ENCODE measurements at regions of chr1 and their contacts with region 1.

Region 1: DNA sequence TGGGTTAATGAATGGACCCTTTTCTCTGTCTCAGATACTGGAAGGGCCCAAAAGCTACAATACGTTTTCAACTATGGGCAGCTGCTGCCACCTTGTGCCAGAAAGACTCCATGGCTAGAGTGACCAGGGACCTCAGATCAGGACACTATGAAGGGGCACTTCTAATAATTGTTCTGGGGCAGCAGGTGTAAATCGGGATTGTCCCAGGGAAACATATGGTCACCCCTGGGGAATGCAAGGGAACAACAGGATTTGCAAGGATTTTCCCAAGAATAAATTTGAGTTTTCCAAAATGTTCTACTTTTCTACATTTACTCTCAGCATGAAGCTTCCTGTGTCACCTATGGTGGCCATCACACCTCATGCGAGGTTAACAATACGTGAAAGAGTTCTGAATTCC is 12.0 kb upstream of the FCAMR start:
- DNase-seq: peak in 4 of 6 donors; percentile 37 to 64 (median 43)
- ATAC-seq: peak; percentile 75 to 97 (median 92)
- H3K4me3 ChIP-seq: no peak overlapping the region
- H3K27ac ChIP-seq: no peak overlapping the region
- H3K4me1 ChIP-seq: no peaks in the 10 kb centered on the region
- H3K27me3 ChIP-seq: no peaks in the 10 kb centered on the region
- CTCF ChIP-seq: peak in 3 of 4 donors; percentile 44 to 61 (median 51)

Region 2: GRCh38 chr1:206734499-206735142 is 247.6 kb before region 1 on chr1:
- intact Hi-C with region 1: loop called in 2 of 3 experiments (anchors 10 kb)
- DNase-seq: peak in 4 of 6 donors; percentile 48 to 84 (median 58)
- ATAC-seq: peak in 3 of 4 donors; percentile 67 to 71 (median 71)
- H3K4me3 ChIP-seq: no peak overlapping the region
- H3K27ac ChIP-seq: no peak overlapping the region
- H3K4me1 ChIP-seq: peaks cover 0 to 8% (median 0%) of the 10 kb centered on the region in 3 donors
- H3K27me3 ChIP-seq: no peaks in the 10 kb centered on the region
- CTCF ChIP-seq: peak; percentile 47 to 69 (median 53)

Region 3: GRCh38 chr1:206935491-206936067 is 46.6 kb before region 1 on chr1:
- intact Hi-C with region 1: loop called in 1 of 3 experiments (anchors 5 kb)
- DNase-seq: peak; percentile 49 to 91 (median 66)
- ATAC-seq: peak; percentile 69 to 96 (median 89)
- H3K4me3 ChIP-seq: no peak overlapping the region
- H3K27ac ChIP-seq: no peak overlapping the region
- H3K4me1 ChIP-seq: no peaks in the 10 kb centered on the region
- H3K27me3 ChIP-seq: no peaks in the 10 kb centered on the region
- CTCF ChIP-seq: peak; percentile 60 to 83 (median 74)

Region 4: GRCh38 chr1:207205614-207206061 is 223.4 kb after region 1 on chr1:
- intact Hi-C with region 1: no loop called
- DNase-seq: no peak
- ATAC-seq: peak in 1 of 4 donors; percentile 50
- H3K4me3 ChIP-seq: no peak overlapping the region
- H3K27ac ChIP-seq: peak overlapping the region in 2 of 4 donors; percentile 29 to 34
- H3K4me1 ChIP-seq: no peaks in the 10 kb centered on the region
- H3K27me3 ChIP-seq: no peaks in the 10 kb centered on the region
- CTCF ChIP-seq: no peak

Region 5: DNA sequence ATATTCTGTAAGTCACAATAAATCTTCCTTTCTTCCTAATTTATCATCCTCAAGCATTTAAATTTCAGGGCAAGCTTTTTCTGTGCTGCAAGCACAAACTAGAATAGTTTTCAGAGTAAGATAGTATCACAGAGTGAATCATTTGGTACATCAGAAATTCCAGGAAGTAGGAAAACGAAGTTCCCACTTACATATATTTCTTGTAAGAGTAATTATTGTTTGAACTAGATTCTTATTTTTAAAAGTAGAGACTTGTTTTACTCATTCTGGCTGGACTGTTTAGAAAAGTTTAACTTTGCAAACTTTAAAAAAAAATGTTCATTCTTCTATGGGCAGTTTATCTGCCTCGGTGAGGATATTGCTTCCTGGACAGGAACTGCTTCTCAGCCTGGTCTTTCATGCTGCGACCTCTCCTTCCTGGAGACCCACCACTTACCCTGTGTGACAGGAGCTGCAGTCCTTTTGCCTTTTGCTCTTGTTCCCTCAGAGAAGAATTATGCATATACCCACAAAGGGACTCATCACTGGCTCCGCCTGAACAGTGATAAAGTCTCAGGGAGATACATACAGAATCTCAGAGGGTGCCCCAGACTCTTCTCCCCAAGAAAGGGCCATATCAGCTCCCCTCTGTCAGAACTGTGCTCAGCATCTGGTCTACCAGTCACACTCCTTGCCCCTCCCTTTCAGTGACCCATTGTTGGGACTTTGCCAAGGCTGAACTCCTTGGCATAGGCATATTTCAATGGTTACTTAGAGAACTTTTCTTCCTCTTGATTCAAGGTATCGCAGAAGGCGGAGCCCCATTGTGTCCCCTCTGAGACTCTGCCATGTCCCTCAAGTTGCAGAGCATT is 236.5 kb after region 1 on chr1:
- intact Hi-C with region 1: no loop called
- DNase-seq: peak in 2 of 6 donors; percentile 15 to 21
- ATAC-seq: peak in 2 of 4 donors; percentile 31 to 35
- H3K4me3 ChIP-seq: no peak overlapping the region
- H3K27ac ChIP-seq: no peak overlapping the region
- H3K4me1 ChIP-seq: no peaks in the 10 kb centered on the region
- H3K27me3 ChIP-seq: no peaks in the 10 kb centered on the region
- CTCF ChIP-seq: no peak